ENCODE measurements at regions of chr1 and their contacts with region 1.

Region 1: GRCh38 chr1:210143465-210144062 is 89.0 kb upstream of the SERTAD4 start:
- DNase-seq: peak; percentile 73 to 89 (median 80)
- ATAC-seq: no peak
- H3K4me3 ChIP-seq: no peak overlapping the region
- H3K27ac ChIP-seq: no peak overlapping the region
- H3K4me1 ChIP-seq: no peaks in the 10 kb centered on the region
- H3K27me3 ChIP-seq: no peaks in the 10 kb centered on the region
- CTCF ChIP-seq: peak; percentile 16 to 73 (median 63)
- POLR2A ChIP-seq: no peak

Region 2: DNA sequence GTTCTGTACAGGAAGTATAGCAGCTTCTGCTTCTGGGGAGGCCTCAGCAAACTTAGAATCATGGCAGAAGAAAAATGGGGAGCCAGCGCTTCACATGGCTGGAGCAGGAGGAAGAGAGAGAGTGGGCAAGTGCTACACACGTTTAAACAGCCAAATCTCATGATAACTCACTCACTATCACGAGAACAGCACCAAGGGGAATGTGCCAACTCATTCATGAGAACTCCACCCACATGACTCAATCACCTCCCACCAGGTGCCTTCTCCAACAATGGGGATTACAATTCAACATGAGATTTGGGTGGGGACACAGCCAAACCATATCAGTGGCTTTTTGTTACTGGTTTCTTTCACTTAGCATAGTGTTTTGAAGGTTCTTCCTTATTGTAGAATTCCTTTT is 66.9 kb before region 1 on chr1:
- intact Hi-C with region 1: no loop called
- DNase-seq: no peak
- ATAC-seq: no peak
- H3K4me3 ChIP-seq: no peak overlapping the region
- H3K27ac ChIP-seq: no peak overlapping the region
- H3K4me1 ChIP-seq: no peaks in the 10 kb centered on the region
- H3K27me3 ChIP-seq: no peaks in the 10 kb centered on the region
- CTCF ChIP-seq: no peak
- POLR2A ChIP-seq: no peak

Region 3: GRCh38 chr1:210222340-210223006 is 78.9 kb after region 1 on chr1:
- intact Hi-C with region 1: no loop called
- DNase-seq: peak in 3 of 4 donors; percentile 14 to 27 (median 24)
- ATAC-seq: peak; percentile 56
- H3K4me3 ChIP-seq: no peak overlapping the region
- H3K27ac ChIP-seq: peak overlapping the region in 1 of 4 donors; percentile 32
- H3K4me1 ChIP-seq: no peaks in the 10 kb centered on the region
- H3K27me3 ChIP-seq: no peaks in the 10 kb centered on the region
- CTCF ChIP-seq: no peak
- POLR2A ChIP-seq: no peak

Region 4: GRCh38 chr1:210301615-210302000 is 158.0 kb after region 1 on chr1:
- intact Hi-C with region 1: loop called (anchors 5 kb)
- DNase-seq: no peak
- ATAC-seq: no peak
- H3K4me3 ChIP-seq: no peak overlapping the region
- H3K27ac ChIP-seq: no peak overlapping the region
- H3K4me1 ChIP-seq: no peaks in the 10 kb centered on the region
- H3K27me3 ChIP-seq: no peaks in the 10 kb centered on the region
- CTCF ChIP-seq: no peak
- POLR2A ChIP-seq: no peak

Region 5: DNA sequence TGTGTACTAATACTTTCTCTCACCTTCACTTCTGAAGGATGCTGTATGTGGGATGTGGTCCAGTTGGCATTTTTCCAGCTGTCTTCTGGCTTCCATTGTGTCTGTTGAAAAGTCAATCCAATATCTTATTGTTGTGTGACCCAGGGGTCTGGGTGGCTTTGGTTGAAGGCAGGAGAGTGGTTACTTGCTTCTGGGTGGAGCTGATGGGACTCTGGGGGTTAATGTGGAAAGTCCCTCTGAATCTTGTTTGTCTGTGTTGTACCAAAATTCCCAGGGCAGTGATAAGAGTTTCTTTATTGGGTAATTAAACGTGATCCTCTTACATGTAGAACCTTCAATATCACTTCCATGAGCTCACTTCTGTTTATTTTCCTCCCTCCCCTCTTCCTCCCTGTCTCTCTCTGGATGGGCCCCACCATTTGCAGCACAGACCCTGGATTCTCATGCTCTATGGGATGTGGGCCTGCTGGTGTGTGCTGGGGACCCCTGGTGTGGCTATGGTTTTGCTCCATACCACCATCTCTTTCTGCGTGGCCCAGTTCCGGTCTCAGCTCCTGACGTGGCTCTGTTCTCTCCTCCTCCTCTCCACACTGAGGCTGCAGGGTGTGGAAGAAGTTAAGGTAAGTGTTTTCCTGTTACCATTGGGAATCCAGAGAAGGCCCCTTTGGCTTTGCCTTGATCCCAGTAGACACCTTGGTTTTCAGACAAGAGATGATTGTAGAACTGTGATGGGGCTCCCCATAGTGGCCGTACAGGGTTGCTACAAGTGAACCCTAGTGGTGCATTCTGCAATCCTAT is 256.7 kb after region 1 on chr1:
- intact Hi-C with region 1: loop called (anchors 10 kb)
- DNase-seq: peak; percentile 41 to 61 (median 58)
- ATAC-seq: peak; percentile 83
- H3K4me3 ChIP-seq: no peak overlapping the region
- H3K27ac ChIP-seq: no peak overlapping the region
- H3K4me1 ChIP-seq: no peaks in the 10 kb centered on the region
- H3K27me3 ChIP-seq: no peaks in the 10 kb centered on the region
- CTCF ChIP-seq: peak; percentile 59 to 80 (median 70)
- POLR2A ChIP-seq: no peak